Breast epithelium (tissue), 4 donors: ENCODE measurements at regions of chr12 and their contacts with region 1.

Region 1: GRCh38 chr12:120579179-120579578 is 2.0 kb downstream of the POP5 start:
- DNase-seq: no peak
- H3K4me3 ChIP-seq: no peak overlapping the region
- H3K27ac ChIP-seq: no peak overlapping the region
- H3K4me1 ChIP-seq: peaks cover 0 to 5% of the 10 kb centered on the region in 2 donors
- H3K27me3 ChIP-seq: no peaks in the 10 kb centered on the region
- CTCF ChIP-seq: no peak
- POLR2A ChIP-seq: no peak

Region 2: GRCh38 chr12:119876761-119877638 is 702.2 kb before region 1 on chr12 and contains the start of gene CIT:
- intact Hi-C with region 1: no loop called
- DNase-seq: peak; percentile 78 to 83
- H3K4me3 ChIP-seq: peak within 1 kb of the TSS; percentile 73 to 95 (median 81)
- H3K27ac ChIP-seq: peak within 1 kb of the TSS in 1 of 2 donors; percentile 58
- H3K4me1 ChIP-seq: no peaks in the 10 kb centered on the region
- H3K27me3 ChIP-seq: no peaks in the 10 kb centered on the region
- CTCF ChIP-seq: no peak
- POLR2A ChIP-seq: no peak
- total RNA-seq, gene CIT: 1.3 to 9.5 (median 2.4) TPM

Region 3: GRCh38 chr12:120554678-120555077 is 24.5 kb before region 1 on chr12:
- intact Hi-C with region 1: no loop called
- DNase-seq: no peak
- H3K4me3 ChIP-seq: no peak overlapping the region
- H3K27ac ChIP-seq: no peak overlapping the region
- H3K4me1 ChIP-seq: no peaks in the 10 kb centered on the region
- H3K27me3 ChIP-seq: no peaks in the 10 kb centered on the region
- CTCF ChIP-seq: no peak
- POLR2A ChIP-seq: no peak

Region 4: DNA sequence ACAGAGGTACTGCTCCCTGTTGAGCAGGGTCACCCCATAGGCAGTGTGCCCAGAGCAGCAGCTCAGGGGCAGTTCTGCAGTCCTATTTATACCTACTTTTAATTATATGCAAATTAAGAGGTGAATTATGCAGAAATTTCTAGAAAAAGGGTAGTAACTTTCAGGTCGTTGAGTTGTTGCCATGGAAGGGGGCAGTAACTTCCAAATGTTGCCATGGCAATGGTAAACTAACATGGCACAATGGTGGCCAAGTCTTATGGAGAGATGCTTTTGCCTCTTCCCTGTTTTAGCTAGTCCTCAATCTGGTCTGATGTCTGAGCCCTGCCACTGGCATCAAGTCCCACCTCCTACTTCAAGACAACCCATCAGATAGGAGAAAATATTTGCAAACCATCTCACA is 523.1 kb after region 1 on chr12:
- intact Hi-C with region 1: loop called (anchors 5 kb)
- DNase-seq: no peak
- H3K4me3 ChIP-seq: no peak overlapping the region
- H3K27ac ChIP-seq: no peak overlapping the region
- H3K4me1 ChIP-seq: no peaks in the 10 kb centered on the region
- H3K27me3 ChIP-seq: no peaks in the 10 kb centered on the region
- CTCF ChIP-seq: no peak
- POLR2A ChIP-seq: no peak